Activated naive CD4-positive, alpha-beta T cell treated with anti-CD3 and anti-CD28 coated beads for 36 hours (primary cell): ENCODE measurements at regions of chr17 and their contacts with region 1.

Region 1: DNA sequence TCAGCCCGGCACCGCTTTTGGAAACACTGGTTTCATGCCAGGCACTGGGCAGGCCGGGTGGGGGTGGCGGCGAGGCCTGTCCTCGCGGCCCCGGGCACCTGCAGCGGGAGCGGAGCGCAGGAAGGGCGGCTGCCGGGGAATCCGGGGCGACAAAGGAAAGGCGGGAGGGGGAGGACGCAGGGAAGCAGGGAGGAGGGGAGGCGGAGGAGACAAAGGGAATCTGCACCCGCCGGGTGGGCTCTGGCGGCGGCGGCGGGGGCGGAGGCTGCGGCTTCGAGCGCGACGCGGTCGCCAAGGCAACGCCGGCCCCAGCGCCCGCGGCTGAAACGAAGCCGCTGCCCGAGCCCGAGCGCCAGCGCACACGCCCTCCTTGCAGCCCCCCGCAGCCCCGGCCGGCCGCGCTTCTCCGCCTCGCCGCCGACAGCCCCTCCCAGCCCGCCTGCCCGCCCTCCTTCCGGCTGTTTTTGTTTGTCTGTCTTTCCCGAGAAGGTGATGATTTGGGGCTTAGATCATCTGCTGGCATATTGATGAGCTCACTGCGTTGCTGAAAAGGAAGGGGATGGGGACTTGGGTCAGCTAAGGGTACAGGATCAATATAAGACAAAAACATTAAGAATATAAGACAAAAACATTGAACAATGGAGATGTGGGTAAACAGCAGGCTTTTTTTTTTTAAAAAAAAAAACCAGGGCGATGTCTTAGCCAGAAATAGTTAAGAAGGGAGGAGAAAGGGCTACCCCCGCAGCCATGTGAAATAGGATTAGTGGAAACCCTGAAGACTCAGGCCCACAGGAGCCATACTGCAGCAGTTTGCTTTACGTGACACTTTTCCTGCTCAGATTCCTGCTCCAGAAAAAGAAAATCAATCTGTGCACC is 32.7 kb downstream of the CDK5R1 start:
- DNase-seq: peak; percentile 85
- H3K4me3 Mint-ChIP-seq: peak overlapping the region; percentile 73
- H3K27ac Mint-ChIP-seq: peak overlapping the region; percentile 92
- H3K4me1 Mint-ChIP-seq: peaks cover 88% of the 10 kb centered on the region
- H3K27me3 Mint-ChIP-seq: no peaks in the 10 kb centered on the region

Region 2: DNA sequence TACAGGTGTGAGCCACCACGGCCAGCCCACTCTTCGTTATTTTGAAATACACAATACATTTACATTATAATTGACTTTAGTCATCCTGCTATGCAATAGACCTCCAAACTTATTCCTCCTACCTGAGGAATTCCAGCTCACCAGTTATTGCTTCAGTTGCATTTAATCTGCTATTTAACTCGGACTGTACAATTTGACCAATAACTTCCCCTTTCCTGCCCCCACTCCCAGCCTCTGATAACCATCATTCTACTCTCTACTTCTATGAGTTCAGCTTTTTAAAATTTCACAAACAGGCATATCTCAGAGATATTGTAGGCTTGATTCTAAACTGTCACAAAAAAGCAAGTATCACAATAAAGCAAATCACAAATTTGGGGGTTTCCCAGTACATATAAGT is 817.4 kb before region 1 on chr17:
- CTCF ChIA-PET with region 1: no interaction called
- intact Hi-C with region 1: no loop called
- DNase-seq: no peak
- H3K4me3 Mint-ChIP-seq: no peak overlapping the region
- H3K27ac Mint-ChIP-seq: no peak overlapping the region
- H3K4me1 Mint-ChIP-seq: no peaks in the 10 kb centered on the region
- H3K27me3 Mint-ChIP-seq: peaks cover 16% of the 10 kb centered on the region

Region 3: GRCh38 chr17:32461853-32462617 is 57.4 kb before region 1 on chr17:
- CTCF ChIA-PET with region 1: interaction called, 4 read pairs
- intact Hi-C with region 1: loop called (anchors 2 kb)
- DNase-seq: peak; percentile 83
- H3K4me3 Mint-ChIP-seq: no peak overlapping the region
- H3K27ac Mint-ChIP-seq: peak overlapping the region; percentile 72
- H3K4me1 Mint-ChIP-seq: peaks cover 37% of the 10 kb centered on the region
- H3K27me3 Mint-ChIP-seq: no peaks in the 10 kb centered on the region

Region 4: GRCh38 chr17:32491371-32492263 is 27.8 kb before region 1 on chr17:
- CTCF ChIA-PET with region 1: interaction called, 22 read pairs
- intact Hi-C with region 1: loop called (anchors 1 kb)
- DNase-seq: peak; percentile 80
- H3K4me3 Mint-ChIP-seq: peak overlapping the region; percentile 90
- H3K27ac Mint-ChIP-seq: peak overlapping the region; percentile 89
- H3K4me1 Mint-ChIP-seq: peaks cover 63% of the 10 kb centered on the region
- H3K27me3 Mint-ChIP-seq: no peaks in the 10 kb centered on the region

Region 5: GRCh38 chr17:32551186-32551955 is 31.9 kb after region 1 on chr17:
- CTCF ChIA-PET with region 1: interaction called, 6 read pairs
- intact Hi-C with region 1: loop called (anchors 1 kb)
- DNase-seq: peak; percentile 22
- H3K4me3 Mint-ChIP-seq: no peak overlapping the region
- H3K27ac Mint-ChIP-seq: peak overlapping the region; percentile 46
- H3K4me1 Mint-ChIP-seq: peaks cover 48% of the 10 kb centered on the region
- H3K27me3 Mint-ChIP-seq: no peaks in the 10 kb centered on the region

Region 6: DNA sequence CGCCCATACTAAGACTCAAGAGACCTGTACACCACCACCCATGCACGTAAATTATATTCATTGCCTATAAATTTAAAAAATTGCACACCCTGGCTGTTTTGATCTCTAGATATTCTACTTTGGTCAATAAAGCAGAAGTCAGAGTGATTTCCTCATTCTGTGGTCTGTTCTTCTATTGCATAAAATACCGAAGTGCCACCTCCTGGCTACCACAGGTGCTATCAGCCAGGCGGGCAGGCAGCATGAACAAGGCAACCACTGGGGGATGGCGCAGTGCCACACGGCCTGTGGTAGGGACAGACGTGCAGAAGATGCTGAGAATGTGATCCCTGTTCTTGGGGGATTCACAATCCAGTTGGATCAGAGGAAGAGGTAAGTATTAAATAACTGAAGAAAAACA is 89.6 kb after region 1 on chr17:
- CTCF ChIA-PET with region 1: interaction called, 3 read pairs
- intact Hi-C with region 1: loop called (anchors 1 kb)
- DNase-seq: peak; percentile 89
- H3K4me3 Mint-ChIP-seq: no peak overlapping the region
- H3K27ac Mint-ChIP-seq: no peak overlapping the region
- H3K4me1 Mint-ChIP-seq: peaks cover 8% of the 10 kb centered on the region
- H3K27me3 Mint-ChIP-seq: no peaks in the 10 kb centered on the region

Region 7: DNA sequence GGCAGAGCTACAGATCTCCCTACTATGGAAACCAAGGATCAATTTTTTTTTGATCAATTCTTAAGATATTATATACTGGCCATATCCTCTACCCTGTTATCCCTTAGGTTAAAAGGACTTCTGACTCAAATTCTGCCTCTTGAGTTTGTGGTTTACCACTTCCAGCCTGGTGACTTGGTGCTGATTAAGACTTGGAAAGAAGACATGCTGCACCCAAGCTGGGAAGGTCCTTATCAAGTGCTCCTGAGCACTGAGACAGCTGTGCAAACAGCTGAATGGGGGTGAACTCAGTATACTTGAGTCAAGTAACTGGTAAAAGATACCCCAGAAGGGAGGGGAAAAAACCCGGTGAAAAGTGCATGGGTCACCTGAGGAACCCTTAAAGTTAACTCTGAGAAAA is 451.7 kb after region 1 on chr17:
- CTCF ChIA-PET with region 1: no interaction called
- intact Hi-C with region 1: no loop called
- DNase-seq: peak; percentile 59
- H3K4me3 Mint-ChIP-seq: no peak overlapping the region
- H3K27ac Mint-ChIP-seq: no peak overlapping the region
- H3K4me1 Mint-ChIP-seq: peaks cover 7% of the 10 kb centered on the region
- H3K27me3 Mint-ChIP-seq: peaks cover 6% of the 10 kb centered on the region